Heart right ventricle (tissue), 16 donors: ENCODE measurements at regions of chr3 and their contacts with region 1.

Region 1: DNA sequence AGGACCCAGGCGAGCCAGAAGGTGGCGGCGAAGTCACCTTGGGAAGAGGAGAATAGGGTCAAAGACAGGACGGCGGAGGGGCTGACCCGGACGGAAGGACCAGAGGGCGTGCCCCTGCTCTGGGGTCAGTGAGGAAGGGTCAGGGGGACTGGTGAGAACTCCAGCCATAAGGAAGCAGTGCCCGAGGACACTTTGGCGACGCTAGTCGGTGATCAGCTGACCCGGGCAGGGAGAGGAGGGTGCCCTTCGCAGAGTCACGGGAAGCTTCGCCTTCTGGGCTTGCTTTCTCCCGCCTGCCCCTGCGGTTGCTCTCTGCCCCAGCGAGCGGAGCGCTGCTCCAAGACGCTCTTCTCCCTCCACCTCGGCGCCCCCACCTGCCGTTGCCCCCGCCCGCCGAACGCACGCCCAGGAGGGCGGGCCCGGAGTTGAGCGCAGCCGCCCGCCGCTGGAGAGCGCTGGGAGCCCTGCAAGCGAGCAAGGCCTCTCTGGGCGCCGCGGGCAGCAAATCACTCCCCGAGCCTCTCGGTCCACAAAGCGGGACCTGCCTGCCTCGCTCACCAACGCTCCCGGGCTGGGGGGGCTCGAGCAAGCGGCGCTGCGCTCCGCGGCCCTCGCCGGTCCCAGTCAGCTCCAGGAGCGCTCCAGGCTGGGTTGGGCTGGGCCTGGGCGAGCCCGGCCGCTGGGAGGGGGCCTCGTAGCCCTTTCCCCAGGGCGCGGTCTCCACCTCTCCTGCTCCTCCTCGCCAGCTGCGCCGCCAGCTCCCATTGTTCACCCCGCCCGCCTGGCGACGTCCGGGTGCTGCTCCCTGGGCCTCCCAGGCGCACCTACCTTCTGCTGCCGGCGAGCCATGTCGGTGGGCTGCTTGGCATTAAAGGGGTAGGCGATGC is 1.2 kb downstream of the CADPS start:
- DNase-seq: peak; percentile 52 to 70
- ATAC-seq: peak; percentile 73 to 94 (median 85)
- H3K4me3 ChIP-seq: peak overlapping the region; percentile 36 to 65 (median 60)
- H3K27ac ChIP-seq: peak overlapping the region; percentile 78 to 96 (median 90)
- H3K4me1 ChIP-seq: peaks cover 0 to 26% (median 6%) of the 10 kb centered on the region in 9 donors
- H3K27me3 ChIP-seq: peaks cover 0 to 55% (median 33%) of the 10 kb centered on the region in 7 donors
- CTCF ChIP-seq: peak in 1 of 9 donors; percentile 2

Region 2: DNA sequence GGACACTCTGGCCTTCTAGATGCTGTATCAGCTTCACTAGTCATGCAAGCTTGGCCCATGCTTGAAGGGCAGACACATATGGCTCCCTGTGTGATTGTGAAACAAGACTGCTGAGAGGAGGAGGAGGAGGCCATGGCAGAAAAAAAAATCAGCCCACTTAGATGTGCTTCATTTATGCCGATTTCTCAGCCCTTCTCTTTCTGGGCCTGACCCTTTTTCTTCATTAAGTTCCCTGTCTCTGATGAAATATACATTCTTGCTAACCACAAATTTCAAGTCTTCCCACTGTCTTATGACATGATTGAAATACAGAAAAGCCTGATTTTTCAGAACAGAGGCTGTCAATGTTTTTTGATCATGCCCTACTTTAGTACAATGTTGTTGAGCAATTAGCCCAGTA is 287.6 kb before region 1 on chr3:
- intact Hi-C with region 1: no loop called
- DNase-seq: no peak
- ATAC-seq: no peak
- H3K4me3 ChIP-seq: no peak overlapping the region
- H3K27ac ChIP-seq: no peak overlapping the region
- H3K4me1 ChIP-seq: peaks cover 0 to 8% (median 0%) of the 10 kb centered on the region in 9 donors
- H3K27me3 ChIP-seq: no peaks in the 10 kb centered on the region
- CTCF ChIP-seq: no peak

Region 3: GRCh38 chr3:62659622-62660021 is 214.4 kb before region 1 on chr3:
- intact Hi-C with region 1: loop called in 2 of 10 experiments (anchors 10 kb)
- DNase-seq: no peak
- ATAC-seq: no peak
- H3K4me3 ChIP-seq: no peak overlapping the region
- H3K27ac ChIP-seq: no peak overlapping the region
- H3K4me1 ChIP-seq: peaks cover 0 to 19% (median 5%) of the 10 kb centered on the region in 9 donors
- H3K27me3 ChIP-seq: no peaks in the 10 kb centered on the region
- CTCF ChIP-seq: no peak

Region 4: DNA sequence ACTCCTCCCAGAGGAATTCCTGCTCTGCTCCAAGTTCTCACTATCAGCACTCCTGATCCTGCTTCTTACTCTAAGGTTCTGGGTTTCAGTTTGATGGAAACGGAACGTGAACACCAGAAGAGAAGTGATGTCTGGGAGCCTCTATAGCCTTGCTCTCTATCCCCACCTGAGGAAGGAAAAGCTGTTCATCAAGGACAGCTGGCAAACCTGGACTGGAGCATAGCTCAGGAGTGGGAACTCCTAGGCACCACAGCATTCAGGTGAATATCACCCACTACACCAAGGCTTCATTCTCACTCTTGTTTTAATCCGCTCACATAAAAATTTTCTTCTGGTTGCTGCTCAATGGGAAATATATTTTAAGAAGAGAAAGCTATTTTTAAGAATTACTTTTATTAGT is 14.2 kb after region 1 on chr3:
- intact Hi-C with region 1: no loop called
- DNase-seq: no peak
- ATAC-seq: no peak
- H3K4me3 ChIP-seq: no peak overlapping the region
- H3K27ac ChIP-seq: no peak overlapping the region
- H3K4me1 ChIP-seq: peaks cover 0 to 6% (median 0%) of the 10 kb centered on the region in 9 donors
- H3K27me3 ChIP-seq: no peaks in the 10 kb centered on the region
- CTCF ChIP-seq: no peak

Region 5: DNA sequence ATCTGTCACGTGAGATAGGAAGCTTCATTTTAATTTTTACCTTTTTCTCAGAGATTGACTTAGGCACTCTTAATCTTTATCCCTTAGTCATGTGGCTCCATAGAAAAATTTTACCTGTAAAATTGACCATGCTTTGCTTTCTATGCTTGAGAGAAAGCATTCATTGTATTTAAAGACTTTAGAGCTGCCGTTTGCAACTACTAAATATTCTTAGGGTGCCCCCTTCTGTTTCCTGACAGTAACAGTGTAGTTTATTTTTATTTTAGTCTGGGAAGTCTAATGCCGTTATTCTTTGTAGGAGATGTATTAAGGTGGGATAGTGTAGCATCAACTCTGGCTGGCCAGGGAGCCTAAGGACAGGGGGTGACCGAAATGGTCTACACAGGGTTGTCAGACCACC is 319.6 kb after region 1 on chr3:
- intact Hi-C with region 1: loop called in 3 of 10 experiments (anchors 5 to 10 kb)
- DNase-seq: no peak
- ATAC-seq: peak in 2 of 8 donors; percentile 37 to 49
- H3K4me3 ChIP-seq: no peak overlapping the region
- H3K27ac ChIP-seq: no peak overlapping the region
- H3K4me1 ChIP-seq: no peaks in the 10 kb centered on the region
- H3K27me3 ChIP-seq: no peaks in the 10 kb centered on the region
- CTCF ChIP-seq: peak; percentile 4 to 63 (median 41)